Activated CD4-positive, alpha-beta memory T cell treated with anti-CD3 and anti-CD28 coated beads for 36 hours (primary cell): ENCODE measurements at regions of chr10 and their contacts with region 1.

Region 1: GRCh38 chr10:80382989-80383388 is 25.4 kb upstream of the PRXL2A start:
- DNase-seq: peak; percentile 54
- H3K4me3 Mint-ChIP-seq: no peak overlapping the region
- H3K27ac Mint-ChIP-seq: no peak overlapping the region
- H3K4me1 Mint-ChIP-seq: peaks cover 12% of the 10 kb centered on the region
- H3K27me3 Mint-ChIP-seq: peaks cover 5% of the 10 kb centered on the region

Region 2: GRCh38 chr10:80333983-80334382 is 49.0 kb before region 1 on chr10:
- CTCF ChIA-PET with region 1: no interaction called
- POLR2A ChIA-PET with region 1: no interaction called
- intact Hi-C with region 1: no loop called
- DNase-seq: no peak
- H3K4me3 Mint-ChIP-seq: no peak overlapping the region
- H3K27ac Mint-ChIP-seq: no peak overlapping the region
- H3K4me1 Mint-ChIP-seq: no peaks in the 10 kb centered on the region
- H3K27me3 Mint-ChIP-seq: no peaks in the 10 kb centered on the region

Region 3: DNA sequence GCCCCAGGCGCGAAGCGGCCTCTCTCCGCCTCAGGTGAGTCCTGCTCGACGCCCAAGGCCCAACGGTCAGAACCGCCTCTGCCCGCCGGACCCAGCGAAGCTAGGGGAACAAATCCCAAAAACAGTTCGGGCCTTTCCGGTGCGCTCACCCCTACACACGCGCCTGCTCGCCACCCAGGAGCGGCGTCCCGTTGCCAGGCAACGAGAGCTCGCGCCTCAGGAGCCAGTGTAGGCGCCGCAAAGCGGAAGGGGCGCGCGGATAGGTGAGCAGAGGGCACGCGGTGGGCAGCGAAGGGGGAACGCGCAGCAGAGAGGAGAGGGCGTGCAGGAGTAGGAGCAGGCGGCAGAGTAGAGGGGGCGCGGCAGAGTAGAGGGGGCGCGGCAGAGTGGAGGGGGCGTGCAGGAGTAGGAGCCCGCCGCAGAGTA is 26.4 kb before region 1 on chr10 and contains the starts of genes DYDC1 and DYDC2:
- CTCF ChIA-PET with region 1: interaction called, 12 read pairs
- POLR2A ChIA-PET with region 1: no interaction called
- intact Hi-C with region 1: no loop called
- DNase-seq: peak; percentile 66
- H3K4me3 Mint-ChIP-seq: peak within 1 kb of the TSS; percentile 49
- H3K27ac Mint-ChIP-seq: no peak within 1 kb of the TSS
- H3K4me1 Mint-ChIP-seq: peaks cover 7% of the 10 kb centered on the region
- H3K27me3 Mint-ChIP-seq: peaks cover 42% of the 10 kb centered on the region
- total RNA-seq, gene DYDC1: not detected
- total RNA-seq, gene DYDC2: not detected

Region 4: DNA sequence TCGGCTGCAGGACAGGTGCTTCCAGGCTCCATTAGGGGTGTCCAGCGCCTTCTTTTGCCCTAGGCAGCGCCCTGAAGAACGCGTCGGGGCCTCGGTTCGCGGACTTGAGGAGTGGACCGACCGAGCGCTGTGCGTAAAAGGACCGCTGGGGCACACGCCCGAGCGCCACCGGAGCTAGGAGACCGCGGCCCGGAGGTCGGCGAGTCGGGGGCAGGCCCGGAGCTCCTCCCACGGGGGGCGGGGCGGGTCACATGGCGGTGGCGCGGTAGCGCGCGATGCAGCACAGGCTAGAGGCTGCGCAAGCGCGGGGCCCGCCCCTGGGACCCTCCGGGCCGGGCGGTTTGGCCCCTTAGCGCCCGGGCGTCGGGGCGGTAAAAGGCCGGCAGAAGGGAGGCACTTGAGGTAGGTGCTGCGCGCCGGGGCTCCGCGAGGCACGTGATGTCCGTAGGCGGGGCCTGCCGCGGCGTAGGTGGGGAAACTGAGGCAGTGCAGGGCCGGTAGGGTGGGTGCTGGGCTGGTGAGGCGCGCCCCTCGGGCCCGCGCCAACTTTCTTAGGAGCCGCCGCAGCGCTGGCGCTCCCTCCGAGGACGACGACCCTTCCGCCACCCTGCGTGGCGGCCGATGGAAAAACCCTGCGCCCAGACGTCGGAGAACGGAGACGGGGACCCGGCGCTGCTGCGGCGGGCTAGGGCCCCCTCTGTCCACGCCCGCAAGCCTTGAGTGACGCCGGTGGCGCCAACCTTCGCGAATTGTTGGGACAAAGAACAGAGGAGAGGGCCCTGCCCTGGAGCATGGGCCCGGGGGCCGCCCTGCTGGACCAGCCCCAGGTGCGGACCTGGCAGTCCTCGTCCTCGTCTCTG is 25.5 kb after region 1 on chr10 and contains the start of gene PRXL2A:
- CTCF ChIA-PET with region 1: interaction called, 14 read pairs
- POLR2A ChIA-PET with region 1: no interaction called
- intact Hi-C with region 1: loop called (anchors 1 kb)
- DNase-seq: peak; percentile 86
- H3K4me3 Mint-ChIP-seq: peak within 1 kb of the TSS; percentile 80
- H3K27ac Mint-ChIP-seq: peak within 1 kb of the TSS; percentile 57
- H3K4me1 Mint-ChIP-seq: peaks cover 16% of the 10 kb centered on the region
- H3K27me3 Mint-ChIP-seq: peaks cover 5% of the 10 kb centered on the region
- total RNA-seq, gene PRXL2A: 9.5 to 10.1 TPM

Region 5: DNA sequence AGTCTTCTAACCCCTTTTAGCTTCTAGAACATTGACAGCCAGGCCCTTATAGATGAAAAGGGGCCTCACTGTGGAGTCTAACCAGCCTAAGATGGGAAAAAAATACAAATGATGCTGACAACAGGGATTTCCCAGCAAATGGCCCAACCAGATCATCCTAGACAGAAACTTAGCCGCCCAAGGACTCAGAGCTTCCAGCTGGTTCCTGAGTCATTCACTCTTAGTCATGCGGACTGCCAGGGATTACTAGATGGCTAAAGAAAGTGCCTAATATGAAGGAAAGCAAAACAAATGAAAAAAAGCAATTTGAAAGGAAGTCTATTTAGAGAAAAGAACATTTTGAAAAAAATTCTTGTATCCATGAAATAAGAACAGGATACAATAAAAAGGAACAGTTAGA is 94.8 kb after region 1 on chr10:
- CTCF ChIA-PET with region 1: no interaction called
- POLR2A ChIA-PET with region 1: no interaction called
- intact Hi-C with region 1: no loop called
- DNase-seq: peak; percentile 59
- H3K4me3 Mint-ChIP-seq: no peak overlapping the region
- H3K27ac Mint-ChIP-seq: peak overlapping the region; percentile 85
- H3K4me1 Mint-ChIP-seq: peaks cover 70% of the 10 kb centered on the region
- H3K27me3 Mint-ChIP-seq: no peaks in the 10 kb centered on the region

Region 6: GRCh38 chr10:80487791-80488538 is 105.0 kb after region 1 on chr10:
- CTCF ChIA-PET with region 1: no interaction called
- POLR2A ChIA-PET with region 1: no interaction called
- intact Hi-C with region 1: no loop called
- DNase-seq: peak; percentile 80
- H3K4me3 Mint-ChIP-seq: peak overlapping the region; percentile 59
- H3K27ac Mint-ChIP-seq: peak overlapping the region; percentile 89
- H3K4me1 Mint-ChIP-seq: peaks cover 99% of the 10 kb centered on the region
- H3K27me3 Mint-ChIP-seq: no peaks in the 10 kb centered on the region

Region 7: GRCh38 chr10:80530251-80530650 is 147.3 kb after region 1 on chr10:
- CTCF ChIA-PET with region 1: no interaction called
- POLR2A ChIA-PET with region 1: no interaction called
- intact Hi-C with region 1: loop called (anchors 1 kb)
- DNase-seq: peak; percentile 80
- H3K4me3 Mint-ChIP-seq: no peak overlapping the region
- H3K27ac Mint-ChIP-seq: peak overlapping the region; percentile 74
- H3K4me1 Mint-ChIP-seq: peaks cover 66% of the 10 kb centered on the region
- H3K27me3 Mint-ChIP-seq: no peaks in the 10 kb centered on the region

Region 8: DNA sequence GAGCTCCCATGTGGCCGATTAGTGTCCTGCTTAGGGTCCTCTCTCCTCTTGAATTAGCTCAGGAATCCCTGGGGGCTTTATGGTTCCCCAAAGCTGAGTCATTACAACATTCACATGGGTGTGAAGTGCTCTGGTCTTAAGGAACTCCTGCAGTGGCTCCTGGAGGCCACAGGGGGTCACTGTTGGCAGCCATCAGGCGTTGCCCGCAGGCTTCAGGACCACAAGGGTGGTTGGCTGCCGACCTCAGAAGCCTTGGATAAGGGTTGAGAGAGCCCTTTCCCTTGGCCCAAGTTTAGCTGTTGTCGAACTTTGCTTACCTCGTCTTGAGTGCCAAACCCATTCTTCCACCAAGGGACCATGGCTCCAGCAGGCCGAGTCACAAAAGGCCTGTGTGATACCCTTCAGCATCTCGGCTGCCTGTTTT is 216.4 kb after region 1 on chr10:
- CTCF ChIA-PET with region 1: interaction called, 5 read pairs
- POLR2A ChIA-PET with region 1: no interaction called
- intact Hi-C with region 1: loop called (anchors 5 kb)
- DNase-seq: peak; percentile 55
- H3K4me3 Mint-ChIP-seq: no peak overlapping the region
- H3K27ac Mint-ChIP-seq: no peak overlapping the region
- H3K4me1 Mint-ChIP-seq: no peaks in the 10 kb centered on the region
- H3K27me3 Mint-ChIP-seq: no peaks in the 10 kb centered on the region